ENCODE measurements at regions of chr1 and their contacts with region 1.

Region 1: GRCh38 chr1:35364741-35365140 is 96.2 kb downstream of the ZMYM4 start:
- DNase-seq: no peak

Region 2: DNA sequence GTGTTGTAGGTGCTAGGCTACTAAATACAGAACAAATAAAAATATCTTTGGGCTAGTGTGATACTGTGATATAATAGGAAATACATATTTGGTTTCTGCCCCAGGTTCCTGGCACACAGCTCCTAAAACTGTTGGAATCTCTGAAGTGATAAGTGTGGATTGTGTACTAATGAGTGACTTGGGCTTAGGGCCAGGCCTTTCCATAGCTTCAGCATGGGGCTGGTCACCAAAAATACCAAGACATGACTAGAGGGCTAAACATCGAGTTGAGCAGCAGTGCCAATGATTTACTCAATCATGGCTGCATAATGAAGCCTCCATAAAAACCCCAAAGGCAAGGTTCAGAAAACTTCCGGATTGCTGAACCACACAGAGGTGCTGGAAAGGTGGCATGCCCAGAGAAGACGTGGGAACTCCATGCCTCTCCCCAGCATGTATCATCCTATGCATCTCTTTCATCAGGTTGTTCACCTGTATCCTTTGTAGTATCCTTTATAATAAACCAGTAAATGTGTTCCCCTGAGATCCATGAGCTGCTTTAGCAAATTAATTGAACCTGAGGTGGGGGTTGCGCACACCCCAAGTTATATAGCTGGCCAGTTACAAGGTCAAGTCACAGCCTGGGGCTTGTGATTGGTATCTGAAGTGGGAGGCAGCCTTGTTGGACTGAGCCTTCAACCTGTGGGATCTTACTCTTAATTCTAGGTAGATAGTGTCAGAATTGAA is 44.6 kb before region 1 on chr1:
- intact Hi-C with region 1: loop called in 1 of 2 experiments (anchors 1 kb)
- DNase-seq: no peak

Measured in posterior vena cava (tissue), 2 donors.